PC-3 (cell line): ENCODE measurements at regions of chr2 and their contacts with region 1.

Region 1: GRCh38 chr2:118464546-118465265 is 376.4 kb downstream of the INSIG2 start:
- DNase-seq: no peak
- ATAC-seq: no peak
- H3K4me3 ChIP-seq: no peak overlapping the region
- H3K27ac ChIP-seq: no peak overlapping the region
- H3K4me1 ChIP-seq: peaks cover 13% of the 10 kb centered on the region
- H3K27me3 ChIP-seq: peaks cover 5% of the 10 kb centered on the region; the same call in 1 of the 2 replicates
- CTCF ChIP-seq: no peak

Region 2: GRCh38 chr2:118371515-118371914 is 93.2 kb before region 1 on chr2:
- CTCF ChIA-PET with region 1: no interaction called
- POLR2A ChIA-PET with region 1: no interaction called
- intact Hi-C with region 1: loop called (anchors 5 kb)
- DNase-seq: peak; percentile 75
- ATAC-seq: peak; percentile 92
- H3K4me3 ChIP-seq: no peak overlapping the region
- H3K27ac ChIP-seq: no peak overlapping the region
- H3K4me1 ChIP-seq: peaks cover 19% of the 10 kb centered on the region
- H3K27me3 ChIP-seq: no peaks in the 10 kb centered on the region
- CTCF ChIP-seq: peak; percentile 95

Region 3: DNA sequence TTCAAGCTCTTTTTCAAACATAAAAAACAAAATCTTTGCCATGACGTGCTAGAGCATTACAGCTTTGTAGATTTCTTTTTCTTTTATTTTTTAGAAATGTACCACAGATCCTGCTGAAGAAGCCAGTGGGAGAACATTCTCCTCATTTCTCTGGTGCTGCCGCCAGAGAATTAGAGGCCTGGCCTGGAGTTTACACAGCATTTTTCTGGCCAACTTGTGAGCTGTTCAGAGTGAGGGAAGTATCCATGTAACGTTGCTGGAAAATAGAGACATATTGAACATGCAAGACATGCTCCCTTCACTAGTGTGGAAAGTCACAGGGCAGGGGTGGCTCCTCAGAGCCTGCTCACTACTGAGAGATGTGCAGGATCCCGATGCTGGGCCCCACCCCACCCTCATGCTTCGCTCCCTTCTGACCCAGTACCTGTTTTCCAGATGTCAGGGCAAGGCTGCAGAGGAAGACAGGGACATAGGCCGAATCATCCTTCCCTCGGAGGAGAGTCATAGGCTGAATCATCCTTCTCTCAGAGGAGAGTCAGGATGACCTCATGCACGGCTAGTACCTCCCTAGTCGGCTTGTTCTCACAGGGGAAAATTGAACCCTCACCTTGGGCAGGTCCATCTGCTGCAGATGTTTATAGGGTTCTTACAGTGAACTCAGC is 77.9 kb before region 1 on chr2:
- CTCF ChIA-PET with region 1: no interaction called
- POLR2A ChIA-PET with region 1: no interaction called
- intact Hi-C with region 1: loop called (anchors 1 kb)
- DNase-seq: peak; percentile 96
- ATAC-seq: peak; percentile 81
- H3K4me3 ChIP-seq: no peak overlapping the region
- H3K27ac ChIP-seq: peak overlapping the region; percentile 99
- H3K4me1 ChIP-seq: peaks cover 67% of the 10 kb centered on the region
- H3K27me3 ChIP-seq: no peaks in the 10 kb centered on the region
- CTCF ChIP-seq: no peak

Region 4: GRCh38 chr2:118763797-118764196 is 299.1 kb after region 1 on chr2:
- CTCF ChIA-PET with region 1: no interaction called
- POLR2A ChIA-PET with region 1: no interaction called
- intact Hi-C with region 1: no loop called
- DNase-seq: peak; percentile 20
- ATAC-seq: peak; percentile 27; the same call in 1 of the 2 replicates
- H3K4me3 ChIP-seq: no peak overlapping the region
- H3K27ac ChIP-seq: no peak overlapping the region
- H3K4me1 ChIP-seq: no peaks in the 10 kb centered on the region
- H3K27me3 ChIP-seq: peaks cover 32% of the 10 kb centered on the region
- CTCF ChIP-seq: peak; percentile 43